Tibial artery (tissue), 4 donors: ENCODE measurements at regions of chr11 and their contacts with region 1.

Region 1: GRCh38 chr11:74611369-74611861 is 19.0 kb downstream of the POLD3 start:
- DNase-seq: no peak
- H3K4me3 ChIP-seq: no peak overlapping the region
- H3K27ac ChIP-seq: peak overlapping the region; percentile 71 to 76
- H3K4me1 ChIP-seq: peaks cover 0 to 22% (median 13%) of the 10 kb centered on the region in 4 donors
- H3K27me3 ChIP-seq: no peaks in the 10 kb centered on the region
- CTCF ChIP-seq: peak; percentile 43 to 64

Region 2: GRCh38 chr11:74726547-74727182 is 115.2 kb after region 1 on chr11:
- intact Hi-C with region 1: loop called (anchors 5 kb)
- DNase-seq: peak; percentile 70 to 85
- H3K4me3 ChIP-seq: no peak overlapping the region
- H3K27ac ChIP-seq: peak overlapping the region in 1 of 2 donors; percentile 1
- H3K4me1 ChIP-seq: peaks cover 0 to 18% (median 13%) of the 10 kb centered on the region in 4 donors
- H3K27me3 ChIP-seq: peaks cover 0 to 8% of the 10 kb centered on the region in 2 donors
- CTCF ChIP-seq: peak; percentile 95